HepG2 (cell line): ENCODE measurements at regions of chrX and their contacts with region 1.

Region 1: GRCh38 chrX:24662352-24662751 is 15.2 kb upstream of the PCYT1B start:
- DNase-seq: peak; percentile 75
- ATAC-seq: peak; percentile 94
- H3K4me3 ChIP-seq: peak overlapping the region in 1 of 3 experiments; percentile 20; a peak in 1 of 6 replicates
- H3K27ac ChIP-seq: peak overlapping the region; percentile 44
- H3K4me1 ChIP-seq: peaks cover 44% of the 10 kb centered on the region
- H3K27me3 ChIP-seq: no peaks in the 10 kb centered on the region
- CTCF ChIP-seq: no peak; the same call in 1 of the 2 replicates
- EP300 ChIP-seq: peak in 1 of 2 experiments; percentile 23; a peak in 1 of 4 replicates
- POLR2A ChIP-seq: no peak
- RAD21 ChIP-seq: no peak

Region 2: DNA sequence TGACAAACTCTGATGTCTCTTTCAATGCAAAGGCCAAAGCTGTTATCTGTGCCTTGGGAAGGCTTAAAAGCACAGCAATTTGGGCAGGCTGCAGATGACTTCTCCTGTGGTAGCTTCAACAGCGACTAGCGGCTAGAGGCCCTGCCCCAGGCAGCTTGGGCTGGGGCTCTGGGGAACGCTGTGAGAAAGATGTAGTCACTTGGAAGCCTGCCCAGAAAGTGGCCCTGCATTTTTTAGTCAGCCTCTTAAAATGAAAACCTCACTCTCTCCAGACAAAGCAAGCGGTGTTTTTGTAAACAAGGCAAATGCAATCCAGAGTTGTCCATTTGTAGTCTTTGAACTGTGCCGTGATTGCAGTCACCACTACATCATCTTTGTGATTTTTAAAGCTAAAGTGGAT is 42.7 kb before region 1 on chrX:
- CTCF ChIA-PET with region 1: no interaction called
- POLR2A ChIA-PET with region 1: interaction called, 3 read pairs
- in situ Hi-C with region 1: no loop called
- intact Hi-C with region 1: loop called (anchors 5 kb)
- DNase-seq: peak; percentile 36
- ATAC-seq: peak; percentile 56
- H3K4me3 ChIP-seq: no peak overlapping the region
- H3K27ac ChIP-seq: no peak overlapping the region
- H3K4me1 ChIP-seq: peaks cover 11% of the 10 kb centered on the region; the same call in 1 of the 2 replicates
- H3K27me3 ChIP-seq: no peaks in the 10 kb centered on the region
- CTCF ChIP-seq: no peak
- EP300 ChIP-seq: no peak
- POLR2A ChIP-seq: no peak
- RAD21 ChIP-seq: no peak